PC-3 (cell line): ENCODE measurements at regions of chr10 and their contacts with region 1.

Region 1: DNA sequence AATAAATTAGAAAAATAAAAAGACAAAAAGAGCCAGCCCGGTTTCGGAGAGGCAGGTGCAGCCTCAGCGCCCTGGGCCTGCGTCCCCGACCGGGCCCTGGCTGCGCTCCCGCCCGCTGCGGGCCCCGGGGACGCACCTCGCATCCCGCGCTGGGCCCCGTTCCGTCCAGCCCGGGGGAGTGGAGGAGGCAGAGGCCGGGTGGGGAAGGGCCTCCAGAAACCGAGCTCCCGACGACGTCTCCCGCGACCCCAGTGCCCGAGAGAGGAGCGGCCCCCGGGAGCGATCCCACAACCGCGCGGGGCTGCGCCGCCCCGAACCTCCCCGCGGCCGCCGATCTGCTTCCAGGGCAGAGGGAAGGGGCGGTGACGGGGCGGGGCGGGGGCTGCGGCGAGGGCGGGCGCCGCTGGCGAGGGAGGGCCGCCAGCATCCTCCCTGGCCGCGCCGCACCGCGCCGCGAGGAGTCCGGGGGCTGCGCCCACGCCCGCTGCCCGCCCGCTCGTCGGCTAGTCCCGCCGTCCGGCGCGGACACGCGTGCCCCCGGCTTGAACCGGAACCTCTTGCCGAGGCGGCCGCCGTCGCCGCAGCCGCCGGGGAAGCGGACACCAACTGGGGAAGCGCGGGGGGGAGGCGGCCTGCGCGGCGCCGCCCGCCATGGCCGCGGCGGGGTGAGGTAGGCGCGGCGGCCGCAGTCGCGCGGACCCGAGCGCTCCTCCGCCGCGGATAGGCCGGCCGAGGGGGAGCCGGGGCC is at the start of gene CCNY:
- DNase-seq: peak; percentile 93
- ATAC-seq: peak; percentile 63
- H3K4me3 ChIP-seq: peak within 1 kb of the TSS; percentile 78
- H3K27ac ChIP-seq: peak within 1 kb of the TSS; percentile 13
- H3K4me1 ChIP-seq: peaks cover 64% of the 10 kb centered on the region
- H3K27me3 ChIP-seq: no peaks in the 10 kb centered on the region
- CTCF ChIP-seq: no peak
- total RNA-seq, gene CCNY: 145 and 146 TPM in 2 replicates

Region 2: GRCh38 chr10:34801097-34801733 is 535.0 kb before region 1 on chr10:
- CTCF ChIA-PET with region 1: no interaction called
- POLR2A ChIA-PET with region 1: no interaction called
- intact Hi-C with region 1: no loop called
- DNase-seq: no peak
- ATAC-seq: no peak
- H3K4me3 ChIP-seq: no peak overlapping the region
- H3K27ac ChIP-seq: no peak overlapping the region
- H3K4me1 ChIP-seq: peaks cover 11% of the 10 kb centered on the region
- H3K27me3 ChIP-seq: no peaks in the 10 kb centered on the region
- CTCF ChIP-seq: no peak

Region 3: GRCh38 chr10:35005868-35006267 is 330.4 kb before region 1 on chr10:
- CTCF ChIA-PET with region 1: no interaction called
- POLR2A ChIA-PET with region 1: no interaction called
- intact Hi-C with region 1: loop called (anchors 5 kb)
- DNase-seq: peak; percentile 100
- ATAC-seq: peak; percentile 81
- H3K4me3 ChIP-seq: no peak overlapping the region
- H3K27ac ChIP-seq: peak overlapping the region; percentile 82
- H3K4me1 ChIP-seq: peaks cover 52% of the 10 kb centered on the region
- H3K27me3 ChIP-seq: no peaks in the 10 kb centered on the region
- CTCF ChIP-seq: no peak

Region 4: DNA sequence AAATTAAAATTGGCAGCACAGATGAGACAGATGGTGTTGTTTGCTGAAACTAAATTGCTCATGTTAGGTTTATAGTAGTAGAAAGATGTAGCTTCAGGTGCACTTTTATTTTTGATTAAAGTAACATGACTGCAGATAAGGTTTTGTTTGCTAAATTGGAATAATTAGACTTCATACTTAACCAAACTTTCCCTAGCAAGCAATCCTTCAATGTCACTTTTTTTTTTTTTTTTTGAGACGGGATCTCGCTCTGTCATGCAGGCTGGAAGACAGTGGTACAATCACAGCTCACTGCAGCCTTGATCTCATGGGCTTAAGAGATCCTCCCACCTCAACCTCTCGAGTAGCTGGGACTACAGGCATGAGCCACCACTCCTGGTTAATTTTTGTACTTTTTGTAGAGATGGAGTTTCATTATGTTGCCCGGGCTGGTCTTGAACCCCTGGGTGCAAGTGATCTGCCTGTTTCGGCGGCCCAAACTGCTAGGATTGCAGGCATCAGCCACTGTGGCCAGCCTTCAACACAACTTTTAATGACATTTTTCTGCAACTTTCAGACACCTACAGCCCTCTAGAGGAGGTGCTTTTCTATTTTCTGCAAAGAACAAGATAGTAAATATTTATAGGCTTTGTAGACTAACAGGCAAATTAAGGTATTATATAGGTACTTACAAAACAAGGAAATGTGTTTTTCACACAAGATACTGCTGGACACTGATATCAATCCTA is 84.7 kb before region 1 on chr10:
- CTCF ChIA-PET with region 1: no interaction called
- POLR2A ChIA-PET with region 1: no interaction called
- intact Hi-C with region 1: no loop called
- DNase-seq: no peak
- ATAC-seq: peak; percentile 52
- H3K4me3 ChIP-seq: no peak overlapping the region
- H3K27ac ChIP-seq: 0 out of 2 replicates have a peak overlapping the region, but pooled peaks have one; percentile 0
- H3K4me1 ChIP-seq: peaks cover 22% of the 10 kb centered on the region
- H3K27me3 ChIP-seq: no peaks in the 10 kb centered on the region
- CTCF ChIP-seq: peak; percentile 53

Region 5: GRCh38 chr10:35306852-35307256 is 29.4 kb before region 1 on chr10:
- CTCF ChIA-PET with region 1: no interaction called
- POLR2A ChIA-PET with region 1: interaction called, 5 read pairs
- intact Hi-C with region 1: loop called (anchors 1 kb)
- DNase-seq: peak; percentile 99
- ATAC-seq: peak; percentile 89
- H3K4me3 ChIP-seq: peak overlapping the region; percentile 56
- H3K27ac ChIP-seq: peak overlapping the region; percentile 83
- H3K4me1 ChIP-seq: peaks cover 17% of the 10 kb centered on the region
- H3K27me3 ChIP-seq: no peaks in the 10 kb centered on the region
- CTCF ChIP-seq: no peak; the same call in 1 of the 2 replicates

Region 6: DNA sequence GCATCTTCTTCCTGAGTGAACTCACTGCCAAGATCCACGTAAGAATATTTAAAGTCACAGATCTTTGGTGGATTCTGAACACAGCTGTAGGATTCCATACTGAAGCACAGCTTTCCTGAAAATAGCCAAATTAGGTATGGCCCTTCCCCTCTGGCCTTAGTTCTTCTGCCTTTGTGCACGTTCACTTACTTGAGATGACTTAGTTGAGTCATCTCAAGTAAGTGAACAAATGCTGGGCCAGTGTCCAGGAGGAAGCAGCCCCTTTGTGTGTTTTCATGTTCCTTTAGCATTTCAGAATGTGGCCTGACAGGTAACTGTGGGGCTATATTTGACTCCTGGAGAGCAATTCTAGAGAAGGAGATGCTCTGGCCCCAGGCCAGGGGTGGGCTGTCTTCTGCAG is 51.5 kb after region 1 on chr10:
- CTCF ChIA-PET with region 1: no interaction called
- POLR2A ChIA-PET with region 1: interaction called, 4 read pairs
- intact Hi-C with region 1: loop called (anchors 5 kb)
- DNase-seq: peak; percentile 100
- ATAC-seq: peak; percentile 87
- H3K4me3 ChIP-seq: no peak overlapping the region
- H3K27ac ChIP-seq: peak overlapping the region; percentile 3
- H3K4me1 ChIP-seq: peaks cover 42% of the 10 kb centered on the region
- H3K27me3 ChIP-seq: no peaks in the 10 kb centered on the region
- CTCF ChIP-seq: no peak

Region 7: DNA sequence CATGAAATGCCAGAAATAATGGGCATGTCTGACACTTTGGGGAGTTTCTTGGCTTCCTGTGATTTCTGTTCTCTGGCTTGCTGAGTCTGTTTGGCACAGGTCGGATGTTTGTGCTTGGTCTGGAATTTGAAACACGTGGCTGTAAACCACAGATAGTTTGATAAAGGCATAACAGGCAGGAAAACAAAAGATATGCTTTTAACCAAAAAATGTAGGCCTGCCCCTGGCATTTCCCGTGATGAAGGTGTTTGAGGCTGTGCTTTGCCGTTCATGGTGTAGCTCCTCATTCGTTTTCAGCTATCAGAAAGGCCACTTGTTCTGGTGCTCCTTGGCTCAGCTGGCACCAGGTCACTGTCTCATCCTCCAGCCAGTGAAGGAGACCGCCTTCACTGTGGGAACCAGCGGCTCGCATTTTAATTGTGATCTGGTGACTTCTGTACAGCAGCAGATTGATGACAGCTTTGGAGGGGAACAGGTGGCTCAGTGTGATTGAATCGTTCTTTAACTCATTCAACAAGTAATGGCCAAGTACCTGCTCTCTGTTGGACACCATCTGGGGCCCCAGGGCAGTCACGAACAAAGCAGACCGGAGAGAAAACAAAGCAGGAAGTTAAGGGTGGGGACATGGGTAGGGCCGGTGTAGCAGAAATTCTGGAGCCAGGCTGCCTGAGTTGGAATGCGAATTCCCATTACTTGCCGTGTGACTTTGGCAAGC is 111.6 kb after region 1 on chr10:
- CTCF ChIA-PET with region 1: no interaction called
- POLR2A ChIA-PET with region 1: interaction called, 5 read pairs
- intact Hi-C with region 1: loop called (anchors 2 kb)
- DNase-seq: peak; percentile 91
- ATAC-seq: peak; percentile 77
- H3K4me3 ChIP-seq: peak overlapping the region; percentile 13
- H3K27ac ChIP-seq: peak overlapping the region; percentile 23
- H3K4me1 ChIP-seq: peaks cover 24% of the 10 kb centered on the region
- H3K27me3 ChIP-seq: no peaks in the 10 kb centered on the region
- CTCF ChIP-seq: no peak

Region 8: GRCh38 chr10:35563261-35563891 is 227.1 kb after region 1 on chr10:
- CTCF ChIA-PET with region 1: interaction called, 3 read pairs
- POLR2A ChIA-PET with region 1: no interaction called
- intact Hi-C with region 1: loop called (anchors 2 kb)
- DNase-seq: peak; percentile 98
- ATAC-seq: peak; percentile 85
- H3K4me3 ChIP-seq: no peak overlapping the region
- H3K27ac ChIP-seq: no peak overlapping the region
- H3K4me1 ChIP-seq: 0 out of 2 replicates have a peak, but pooled peaks cover 2% of the 10 kb centered on the region
- H3K27me3 ChIP-seq: no peaks in the 10 kb centered on the region
- CTCF ChIP-seq: peak; percentile 100